ENCODE measurements at regions of chr10 and their contacts with region 1.

Region 1: GRCh38 chr10:7525314-7526016 is 114.6 kb upstream of the SFMBT2 start:
- DNase-seq: peak; percentile 83
- H3K4me3 ChIP-seq: no peak overlapping the region
- H3K27ac ChIP-seq: no peak overlapping the region
- H3K4me1 ChIP-seq: peaks cover 13% of the 10 kb centered on the region
- CTCF ChIP-seq: peak; percentile 99

Region 2: DNA sequence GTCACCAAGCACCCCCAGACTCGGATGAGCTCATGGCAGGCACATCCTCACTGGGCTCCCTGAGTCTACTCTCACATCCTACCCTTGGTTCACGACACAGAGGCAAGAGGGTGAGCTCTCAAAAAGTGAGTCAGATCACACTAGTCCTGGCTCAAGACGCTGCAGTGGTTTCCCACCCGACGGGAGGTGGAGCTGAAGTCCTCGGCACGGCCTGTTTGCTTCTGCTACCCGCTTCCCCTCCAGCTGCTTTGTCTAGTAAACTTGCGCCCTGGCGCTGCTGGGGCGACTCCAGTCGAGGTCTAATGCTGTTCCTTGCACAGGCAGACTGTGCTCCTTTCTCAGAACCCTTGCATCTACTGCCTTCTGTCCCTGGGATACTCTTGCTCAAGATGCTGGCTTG is 101.2 kb before region 1 on chr10:
- CTCF ChIA-PET with region 1: interaction called, 3 read pairs
- POLR2A ChIA-PET with region 1: no interaction called
- intact Hi-C with region 1: loop called (anchors 5 kb)
- DNase-seq: peak; percentile 61
- H3K4me3 ChIP-seq: no peak overlapping the region
- H3K27ac ChIP-seq: no peak overlapping the region
- H3K4me1 ChIP-seq: peaks cover 3% of the 10 kb centered on the region
- CTCF ChIP-seq: peak; percentile 58

Region 3: DNA sequence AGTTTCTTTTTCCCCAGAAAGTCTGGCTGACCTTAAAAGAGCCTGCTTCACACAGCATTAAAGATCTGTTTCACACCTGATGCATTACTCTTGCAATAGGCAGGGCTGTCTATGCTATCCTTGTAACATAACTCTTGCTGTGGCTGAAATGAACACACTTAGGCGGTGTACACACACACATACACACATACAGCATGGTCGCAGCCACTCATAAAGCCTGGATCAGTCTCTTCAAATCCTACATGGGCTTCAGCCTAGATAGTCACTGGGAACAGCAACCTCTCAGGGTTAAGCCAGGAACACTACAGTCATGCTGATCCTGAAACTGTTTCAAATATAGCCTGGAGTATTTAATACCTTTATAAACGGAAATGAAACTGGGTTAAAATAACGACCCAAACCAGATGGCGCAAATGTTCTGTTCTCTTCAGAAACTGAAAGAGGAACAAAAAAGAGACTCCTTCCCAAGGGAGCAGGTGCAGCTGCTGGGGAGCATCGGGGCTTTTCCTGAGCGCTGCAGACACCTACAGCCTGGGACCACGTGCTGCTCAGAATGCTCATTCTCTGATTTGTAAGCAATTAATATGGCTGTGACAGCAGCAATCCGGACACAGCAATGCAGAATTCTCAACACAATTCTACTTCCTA is 53.6 kb before region 1 on chr10:
- CTCF ChIA-PET with region 1: no interaction called
- POLR2A ChIA-PET with region 1: interaction called, 14 read pairs
- intact Hi-C with region 1: no loop called
- DNase-seq: peak; percentile 99
- H3K4me3 ChIP-seq: peak overlapping the region; percentile 55
- H3K27ac ChIP-seq: peak overlapping the region; percentile 91
- H3K4me1 ChIP-seq: peaks cover 75% of the 10 kb centered on the region
- CTCF ChIP-seq: no peak

Region 4: GRCh38 chr10:7622969-7623368 is 97.5 kb after region 1 on chr10:
- CTCF ChIA-PET with region 1: no interaction called
- POLR2A ChIA-PET with region 1: no interaction called
- intact Hi-C with region 1: loop called (anchors 1 kb)
- DNase-seq: no peak
- H3K4me3 ChIP-seq: no peak overlapping the region
- H3K27ac ChIP-seq: no peak overlapping the region
- H3K4me1 ChIP-seq: peaks cover 7% of the 10 kb centered on the region
- CTCF ChIP-seq: peak; percentile 45; the same call in 1 of the 2 replicates

Region 5: DNA sequence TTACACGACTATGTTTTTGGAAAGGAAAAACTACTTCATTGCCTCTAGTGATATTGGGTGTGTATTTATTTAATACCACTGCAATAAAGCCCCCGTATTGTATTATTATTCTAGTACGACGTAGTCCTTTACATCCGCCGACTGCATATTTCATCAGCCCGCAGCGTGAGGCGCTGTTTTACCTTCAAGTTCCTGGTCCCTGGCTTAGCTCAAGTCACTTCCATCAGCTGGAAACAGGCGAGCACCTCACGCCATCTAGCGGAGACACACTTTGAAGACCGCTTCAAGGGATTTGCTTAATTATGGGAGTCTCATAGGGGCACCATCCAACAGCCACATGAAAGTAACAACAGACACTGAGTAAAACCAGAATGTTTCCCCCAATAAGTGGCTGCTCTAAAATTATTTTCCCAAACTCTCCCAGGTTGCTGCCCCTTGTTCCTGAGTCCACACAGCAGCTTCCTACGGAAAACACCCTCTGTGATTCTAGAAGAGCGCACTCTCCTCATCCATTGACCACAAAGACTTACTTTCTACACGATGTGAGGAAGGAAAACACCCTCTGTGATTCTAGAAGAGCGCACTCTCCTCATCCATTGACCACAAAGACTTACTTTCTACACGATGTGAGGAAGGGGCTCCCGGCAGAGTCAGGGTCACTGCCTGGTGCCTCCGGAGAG is 161.9 kb after region 1 on chr10:
- CTCF ChIA-PET with region 1: interaction called, 5 read pairs
- POLR2A ChIA-PET with region 1: no interaction called
- intact Hi-C with region 1: loop called (anchors 1 kb)
- DNase-seq: peak; percentile 91
- H3K4me3 ChIP-seq: no peak overlapping the region
- H3K27ac ChIP-seq: no peak overlapping the region
- H3K4me1 ChIP-seq: no peaks in the 10 kb centered on the region
- CTCF ChIP-seq: peak; percentile 100

Region 6: GRCh38 chr10:7818295-7819122 is 293.0 kb after region 1 on chr10 and contains the start of gene TAF3:
- CTCF ChIA-PET with region 1: no interaction called
- POLR2A ChIA-PET with region 1: no interaction called
- intact Hi-C with region 1: loop called (anchors 10 kb)
- DNase-seq: peak; percentile 96
- H3K4me3 ChIP-seq: peak within 1 kb of the TSS; percentile 96
- H3K27ac ChIP-seq: no peak within 1 kb of the TSS
- H3K4me1 ChIP-seq: peaks cover 21% of the 10 kb centered on the region
- CTCF ChIP-seq: no peak
- total RNA-seq, gene TAF3: 3.8 and 4.4 TPM in 2 replicates

Region 7: GRCh38 chr10:7986851-7987250 is 461.4 kb after region 1 on chr10:
- CTCF ChIA-PET with region 1: no interaction called
- POLR2A ChIA-PET with region 1: no interaction called
- intact Hi-C with region 1: no loop called
- DNase-seq: no peak
- H3K4me3 ChIP-seq: no peak overlapping the region
- H3K27ac ChIP-seq: no peak overlapping the region
- H3K4me1 ChIP-seq: no peaks in the 10 kb centered on the region
- CTCF ChIP-seq: no peak

Measured in OCI-LY7 (cell line).